Transverse colon (tissue), 4 donors: ENCODE measurements at regions of chr12 and their contacts with region 1.

Region 1: DNA sequence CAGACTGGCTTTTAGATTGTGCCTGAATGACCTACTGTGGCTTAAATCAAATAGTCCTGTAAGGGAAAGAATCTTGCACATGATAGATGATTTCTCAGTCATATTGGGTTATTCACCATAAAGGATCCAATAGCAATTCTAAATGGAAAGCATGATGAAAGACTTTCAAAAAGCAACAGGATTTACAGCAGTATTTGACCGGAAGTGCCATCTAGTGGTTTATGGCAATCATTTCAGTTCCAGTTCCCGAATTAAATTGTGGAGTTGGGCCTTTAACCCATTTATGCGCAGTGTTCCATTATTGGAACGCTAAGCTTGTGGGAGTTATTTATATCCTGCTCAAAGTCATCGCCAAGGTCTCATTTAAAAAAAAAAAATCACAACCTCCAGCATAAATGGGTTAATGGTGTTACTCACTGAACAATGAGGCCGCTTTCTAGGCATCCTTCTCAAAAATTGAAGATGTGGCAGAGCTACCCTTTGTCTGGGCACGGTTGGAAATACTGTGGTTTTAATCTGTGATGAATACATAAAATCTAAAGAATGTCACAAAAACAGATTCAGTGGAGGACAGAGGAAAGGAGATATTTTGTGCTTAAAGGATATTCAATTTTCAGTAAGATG is 60.8 kb upstream of the REP15 start:
- DNase-seq: no peak
- H3K4me3 ChIP-seq: no peak overlapping the region
- H3K27ac ChIP-seq: no peak overlapping the region
- H3K4me1 ChIP-seq: peaks cover 0 to 8% (median 0%) of the 10 kb centered on the region in 4 donors
- H3K27me3 ChIP-seq: no peaks in the 10 kb centered on the region
- CTCF ChIP-seq: peak; percentile 56 to 75 (median 60)
- EP300 ChIP-seq: no peak
- POLR2A ChIP-seq: no peak

Region 2: GRCh38 chr12:27123642-27124041 is 511.8 kb before region 1 on chr12:
- in situ Hi-C with region 1: loop called in 1 of 4 experiments (anchors 5 kb)
- intact Hi-C with region 1: no loop called
- DNase-seq: no peak
- H3K4me3 ChIP-seq: no peak overlapping the region
- H3K27ac ChIP-seq: no peak overlapping the region
- H3K4me1 ChIP-seq: no peaks in the 10 kb centered on the region
- H3K27me3 ChIP-seq: no peaks in the 10 kb centered on the region
- CTCF ChIP-seq: peak in 3 of 5 experiments; percentile 18 to 21 (median 18)
- EP300 ChIP-seq: no peak
- POLR2A ChIP-seq: no peak

Region 3: GRCh38 chr12:27602516-27602915 is 32.9 kb before region 1 on chr12:
- in situ Hi-C with region 1: no loop called
- intact Hi-C with region 1: no loop called
- DNase-seq: no peak
- H3K4me3 ChIP-seq: no peak overlapping the region
- H3K27ac ChIP-seq: no peak overlapping the region
- H3K4me1 ChIP-seq: peaks cover 0 to 17% (median 7%) of the 10 kb centered on the region in 4 donors
- H3K27me3 ChIP-seq: no peaks in the 10 kb centered on the region
- CTCF ChIP-seq: no peak
- EP300 ChIP-seq: no peak
- POLR2A ChIP-seq: no peak